ENCODE measurements at regions of chr16 and their contacts with region 1.

Region 1: GRCh38 chr16:68590201-68590994 is 51.3 kb downstream of the ZFP90 start:
- DNase-seq: no peak
- H3K4me3 ChIP-seq: no peak overlapping the region
- H3K27me3 ChIP-seq: no peaks in the 10 kb centered on the region
- CTCF ChIP-seq: peak; percentile 95

Region 2: GRCh38 chr16:68452176-68452575 is 138.2 kb before region 1 on chr16:
- CTCF ChIA-PET with region 1: no interaction called
- POLR2A ChIA-PET with region 1: no interaction called
- DNase-seq: peak; percentile 56
- H3K4me3 ChIP-seq: no peak overlapping the region
- H3K27me3 ChIP-seq: no peaks in the 10 kb centered on the region
- CTCF ChIP-seq: no peak

Region 3: DNA sequence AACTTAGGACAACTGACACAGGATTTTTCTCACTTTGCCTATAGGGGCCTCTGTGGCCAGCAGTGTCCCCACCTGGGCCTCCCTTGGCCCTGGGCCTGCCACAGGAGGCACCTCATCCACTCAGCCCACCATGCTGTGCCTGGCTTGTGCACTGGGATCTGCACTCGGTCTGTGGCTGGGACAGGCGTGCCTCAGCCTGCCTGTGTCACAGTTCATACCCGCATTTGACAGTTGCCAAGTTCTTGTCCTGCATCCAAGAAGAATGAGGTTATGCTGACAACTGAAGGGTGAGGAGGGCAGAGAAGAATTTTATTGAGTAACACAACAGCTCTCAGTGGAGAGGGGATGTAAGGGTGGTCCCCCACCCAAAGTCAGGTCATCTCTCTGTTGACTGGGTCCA is 15.3 kb before region 1 on chr16:
- CTCF ChIA-PET with region 1: interaction called, 12 read pairs
- POLR2A ChIA-PET with region 1: no interaction called
- DNase-seq: no peak
- H3K4me3 ChIP-seq: no peak overlapping the region
- H3K27me3 ChIP-seq: no peaks in the 10 kb centered on the region
- CTCF ChIP-seq: no peak

Region 4: GRCh38 chr16:68651136-68651535 is 60.7 kb after region 1 on chr16:
- CTCF ChIA-PET with region 1: no interaction called
- POLR2A ChIA-PET with region 1: no interaction called
- DNase-seq: no peak
- H3K4me3 ChIP-seq: no peak overlapping the region
- H3K27me3 ChIP-seq: peaks cover 12% of the 10 kb centered on the region
- CTCF ChIP-seq: no peak

Region 5: GRCh38 chr16:68704232-68704867 is 114.0 kb after region 1 on chr16:
- CTCF ChIA-PET with region 1: interaction called, 29 read pairs
- POLR2A ChIA-PET with region 1: no interaction called
- DNase-seq: no peak
- H3K4me3 ChIP-seq: no peak overlapping the region
- H3K27me3 ChIP-seq: no peaks in the 10 kb centered on the region; the same call in 1 of the 2 replicates
- CTCF ChIP-seq: peak; percentile 85

Region 6: GRCh38 chr16:68811503-68811902 is 221.1 kb after region 1 on chr16:
- CTCF ChIA-PET with region 1: interaction called, 13 read pairs
- POLR2A ChIA-PET with region 1: no interaction called
- DNase-seq: no peak
- H3K4me3 ChIP-seq: no peak overlapping the region
- H3K27me3 ChIP-seq: no peaks in the 10 kb centered on the region
- CTCF ChIP-seq: no peak

Region 7: DNA sequence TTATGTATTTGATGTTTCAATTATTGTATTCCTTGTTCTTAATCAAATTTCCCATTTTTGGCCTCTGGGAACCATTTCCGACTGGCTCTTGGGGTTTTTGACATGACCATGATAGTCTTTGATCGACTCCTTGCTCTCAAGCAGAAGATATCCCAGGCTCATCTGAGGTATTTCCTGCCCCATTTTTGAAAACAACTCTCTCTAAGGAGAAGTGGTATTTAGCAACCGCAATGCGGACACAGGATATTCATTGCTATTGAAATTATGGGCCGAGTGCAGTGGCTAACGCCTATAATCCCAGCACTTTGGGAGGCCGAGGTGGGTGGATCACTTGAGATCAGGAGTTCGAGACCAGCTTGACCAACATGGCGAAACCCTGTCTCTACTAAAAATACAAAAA is 258.4 kb after region 1 on chr16:
- CTCF ChIA-PET with region 1: interaction called, 24 read pairs
- POLR2A ChIA-PET with region 1: no interaction called
- DNase-seq: no peak
- H3K4me3 ChIP-seq: no peak overlapping the region
- H3K27me3 ChIP-seq: no peaks in the 10 kb centered on the region
- CTCF ChIP-seq: no peak

Measured in BJ (cell line).